Activated CD8-positive, alpha-beta T cell treated with anti-CD3 and anti-CD28 coated beads, Interleukin-2, amount 10 ng/mL, durations not matched to agents 7 days and 5 days (primary cell): ENCODE measurements at regions of chr17 and their contacts with region 1.

Region 1: DNA sequence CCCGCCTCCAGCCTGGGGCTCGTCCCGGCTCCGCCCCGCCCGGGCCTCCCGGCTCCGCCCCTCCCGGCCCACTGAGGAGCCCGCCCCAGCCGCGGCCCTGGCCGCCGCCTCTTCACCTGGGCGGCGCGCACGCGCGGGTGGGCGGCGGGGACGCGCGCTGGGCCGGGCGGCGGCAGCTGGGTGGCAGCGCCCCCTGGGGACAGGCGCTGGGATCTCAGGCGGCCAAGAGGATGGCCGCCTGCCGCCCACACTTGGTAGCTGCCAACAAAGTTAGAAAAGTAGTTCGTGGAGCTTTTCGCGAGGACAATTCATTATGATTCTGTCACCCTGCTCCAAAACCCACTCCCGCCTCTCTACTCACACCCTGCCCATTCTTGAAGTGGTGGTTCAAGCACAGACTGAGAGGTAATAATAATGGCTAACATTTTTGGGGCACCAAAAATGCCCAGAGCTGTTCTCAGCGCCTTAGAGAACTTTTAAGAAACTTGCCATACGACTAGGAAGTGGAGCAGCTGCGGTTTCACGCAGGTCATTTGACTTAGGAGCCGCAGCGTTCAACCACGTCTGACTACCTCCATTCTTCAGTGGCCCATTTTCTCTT is 340 bp upstream of the MYO1D start:
- DNase-seq: peak; percentile 92
- ATAC-seq: peak; percentile 97
- H3K4me3 Mint-ChIP-seq: peak overlapping the region; percentile 66
- H3K27ac Mint-ChIP-seq: peak overlapping the region; percentile 78
- H3K4me1 Mint-ChIP-seq: peaks cover 14% of the 10 kb centered on the region
- H3K27me3 Mint-ChIP-seq: peaks cover 41% of the 10 kb centered on the region

Region 2: GRCh38 chr17:32659419-32659842 is 217.8 kb before region 1 on chr17:
- CTCF ChIA-PET with region 1: interaction called, 11 read pairs
- POLR2A ChIA-PET with region 1: no interaction called
- DNase-seq: peak; percentile 77
- ATAC-seq: peak; percentile 63
- H3K4me3 Mint-ChIP-seq: no peak overlapping the region
- H3K27ac Mint-ChIP-seq: no peak overlapping the region
- H3K4me1 Mint-ChIP-seq: no peaks in the 10 kb centered on the region
- H3K27me3 Mint-ChIP-seq: peaks cover 9% of the 10 kb centered on the region

Region 3: GRCh38 chr17:32783602-32784001 is 93.7 kb before region 1 on chr17:
- CTCF ChIA-PET with region 1: interaction called, 119 read pairs
- POLR2A ChIA-PET with region 1: no interaction called
- DNase-seq: no peak
- ATAC-seq: no peak
- H3K4me3 Mint-ChIP-seq: no peak overlapping the region
- H3K27ac Mint-ChIP-seq: no peak overlapping the region
- H3K4me1 Mint-ChIP-seq: no peaks in the 10 kb centered on the region
- H3K27me3 Mint-ChIP-seq: peaks cover 10% of the 10 kb centered on the region

Region 4: DNA sequence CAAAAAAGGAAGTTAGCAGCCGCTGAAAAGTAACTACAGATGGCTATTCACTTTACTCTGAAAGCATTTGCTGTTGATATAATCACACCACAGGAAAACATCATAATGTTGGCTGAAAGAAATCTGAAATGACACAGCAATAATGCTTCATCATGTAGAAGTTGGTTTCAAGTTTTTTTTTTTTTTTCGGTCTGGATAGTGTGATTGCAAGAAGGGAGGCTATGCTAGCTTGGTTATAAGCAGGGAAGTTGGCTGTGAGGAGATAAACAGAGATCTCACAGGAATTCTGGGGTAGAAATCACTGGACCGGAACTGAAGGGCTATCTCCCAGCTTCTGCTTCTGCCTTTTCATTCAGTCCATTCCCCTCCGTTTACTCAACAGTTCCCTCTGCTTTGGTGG is 58.2 kb before region 1 on chr17:
- CTCF ChIA-PET with region 1: interaction called, 10 read pairs
- POLR2A ChIA-PET with region 1: no interaction called
- DNase-seq: no peak
- ATAC-seq: no peak
- H3K4me3 Mint-ChIP-seq: no peak overlapping the region
- H3K27ac Mint-ChIP-seq: no peak overlapping the region
- H3K4me1 Mint-ChIP-seq: peaks cover 2% of the 10 kb centered on the region
- H3K27me3 Mint-ChIP-seq: peaks cover 20% of the 10 kb centered on the region

Region 5: DNA sequence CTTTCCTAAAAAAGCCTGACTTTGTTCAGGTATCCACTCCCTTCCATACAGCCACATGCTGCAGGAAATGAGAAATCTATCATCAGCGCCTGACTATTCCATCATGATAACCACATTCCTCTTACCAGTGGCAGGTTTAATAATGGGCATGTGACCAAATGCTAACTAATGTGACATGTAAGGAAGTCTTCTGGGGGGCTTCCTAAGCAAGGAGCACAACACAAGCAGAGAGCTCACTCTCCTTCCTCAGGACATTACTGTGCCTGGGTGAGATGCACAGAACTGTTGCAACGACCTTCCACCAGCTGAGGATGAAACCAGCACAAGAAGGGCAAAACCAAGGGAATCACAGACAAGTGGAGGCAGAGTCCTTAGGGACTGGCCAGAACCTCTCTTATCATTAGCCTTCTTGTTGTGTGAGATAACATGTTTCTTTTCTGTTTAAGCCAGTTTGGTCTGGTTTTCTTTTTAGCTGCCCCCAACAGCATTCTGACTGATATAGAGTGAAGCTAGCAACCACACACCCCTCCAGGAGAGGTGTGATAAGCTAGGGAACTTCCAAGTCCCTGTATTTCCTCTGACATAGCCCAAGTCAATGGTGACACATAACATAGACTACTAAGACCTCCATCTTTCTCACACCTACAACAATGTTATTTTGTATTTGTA is 17.3 kb before region 1 on chr17:
- CTCF ChIA-PET with region 1: interaction called, 57 read pairs
- POLR2A ChIA-PET with region 1: no interaction called
- DNase-seq: no peak
- ATAC-seq: no peak
- H3K4me3 Mint-ChIP-seq: no peak overlapping the region
- H3K27ac Mint-ChIP-seq: no peak overlapping the region
- H3K4me1 Mint-ChIP-seq: no peaks in the 10 kb centered on the region
- H3K27me3 Mint-ChIP-seq: peaks cover 7% of the 10 kb centered on the region

Region 6: GRCh38 chr17:32909787-32910369 is 32.6 kb after region 1 on chr17:
- CTCF ChIA-PET with region 1: interaction called, 58 read pairs
- POLR2A ChIA-PET with region 1: interaction called, 4 read pairs
- DNase-seq: peak; percentile 75
- ATAC-seq: peak; percentile 87
- H3K4me3 Mint-ChIP-seq: no peak overlapping the region
- H3K27ac Mint-ChIP-seq: no peak overlapping the region
- H3K4me1 Mint-ChIP-seq: peaks cover 12% of the 10 kb centered on the region
- H3K27me3 Mint-ChIP-seq: peaks cover 38% of the 10 kb centered on the region

Region 7: DNA sequence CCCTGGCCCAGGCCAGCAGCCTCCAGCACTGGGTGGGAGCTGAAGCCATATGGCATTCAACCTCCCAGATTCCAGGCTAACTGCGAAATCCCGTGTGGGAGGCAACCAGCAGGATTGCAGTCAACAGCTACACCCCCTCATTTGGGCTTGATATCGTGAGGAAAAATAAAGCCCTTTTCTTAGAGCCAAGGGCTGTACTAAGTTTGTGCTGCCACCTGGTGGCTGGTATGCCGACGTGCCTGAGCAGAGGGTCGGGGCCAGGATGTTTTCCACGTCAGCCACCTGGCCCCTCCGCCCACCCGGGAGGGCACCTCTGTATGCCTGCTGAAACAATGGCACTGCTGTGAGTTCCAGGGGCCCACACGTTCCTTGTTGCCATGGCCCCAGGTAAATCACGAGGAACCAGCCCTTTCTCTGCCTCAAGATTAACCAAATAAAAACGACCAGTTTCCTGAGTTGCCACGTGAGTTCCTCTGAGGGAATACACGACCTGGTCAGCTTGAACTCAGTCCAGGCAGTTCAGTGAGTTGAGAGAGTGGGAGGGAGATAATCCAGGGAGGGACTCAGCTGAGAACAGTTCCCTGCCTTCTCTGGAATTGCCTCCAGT is 59.7 kb after region 1 on chr17:
- CTCF ChIA-PET with region 1: interaction called, 22 read pairs
- POLR2A ChIA-PET with region 1: no interaction called
- DNase-seq: peak; percentile 70
- ATAC-seq: peak; percentile 80
- H3K4me3 Mint-ChIP-seq: no peak overlapping the region
- H3K27ac Mint-ChIP-seq: no peak overlapping the region
- H3K4me1 Mint-ChIP-seq: peaks cover 3% of the 10 kb centered on the region
- H3K27me3 Mint-ChIP-seq: peaks cover 12% of the 10 kb centered on the region